Mammary epithelial cell (primary cell): ENCODE measurements at regions of chrX and their contacts with region 1.

Region 1: DNA sequence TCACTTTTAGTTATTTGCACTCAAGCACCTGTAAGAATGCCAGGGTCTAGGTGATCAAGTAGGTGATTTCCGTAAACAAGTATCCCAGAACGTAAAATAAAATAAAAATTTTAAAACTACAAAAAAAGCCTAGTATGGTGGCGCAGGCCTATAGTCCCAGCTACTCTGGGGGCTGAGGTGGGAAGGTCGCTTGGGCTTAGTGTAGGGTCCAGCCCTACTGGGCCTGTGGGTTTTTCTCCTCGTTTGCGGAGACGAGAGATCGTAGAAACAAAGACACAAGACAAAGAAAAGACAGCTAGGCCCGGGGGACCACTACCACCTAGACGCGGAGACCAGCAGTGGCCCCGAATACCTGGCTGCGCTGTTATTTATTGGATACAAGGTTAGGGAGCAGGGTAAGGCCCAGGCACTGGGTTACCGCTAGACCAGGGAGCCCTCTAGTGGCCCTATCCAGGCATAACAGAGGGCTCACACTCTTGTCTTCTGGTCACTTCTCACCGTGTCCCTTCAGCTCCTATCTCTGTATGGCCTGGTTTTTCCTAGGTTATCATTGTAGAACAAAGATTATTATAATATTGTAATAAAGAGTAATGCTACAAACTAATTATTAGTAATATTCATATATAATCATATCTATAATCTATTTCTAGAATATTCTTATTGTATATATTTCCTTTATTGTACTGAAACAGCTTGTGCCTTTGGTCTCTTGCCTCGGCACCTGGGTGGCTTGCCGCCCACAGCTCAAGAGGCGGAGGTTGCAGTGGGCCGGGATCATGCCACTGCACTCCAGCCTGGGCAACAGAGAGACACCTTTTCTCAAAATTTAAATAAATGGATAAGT is 38.4 kb downstream of the SAGE1 start:
- DNase-seq: peak; percentile 23
- H3K4me3 ChIP-seq: no peak overlapping the region
- H3K27ac ChIP-seq: no peak overlapping the region
- H3K4me1 ChIP-seq: no peaks in the 10 kb centered on the region
- H3K27me3 ChIP-seq: no peaks in the 10 kb centered on the region
- CTCF ChIP-seq: peak; percentile 71 to 79

Region 2: GRCh38 chrX:135625995-135626394 is 305.9 kb before region 1 on chrX:
- CTCF ChIA-PET with region 1: no interaction called
- dilution Hi-C with region 1: no loop called
- in situ Hi-C with region 1: no loop called
- intact Hi-C with region 1: loop called (anchors 2 kb)
- DNase-seq: no peak
- H3K4me3 ChIP-seq: no peak overlapping the region
- H3K27ac ChIP-seq: no peak overlapping the region
- H3K4me1 ChIP-seq: no peaks in the 10 kb centered on the region
- H3K27me3 ChIP-seq: no peaks in the 10 kb centered on the region
- CTCF ChIP-seq: peak; percentile 15 to 32